Activated B cell treated with CpG ODN at 0.5 μM for 24 hours (primary cell): ENCODE measurements at regions of chr14 and their contacts with region 1.

Region 1: GRCh38 chr14:50813544-50813863 is 17.5 kb downstream of the NIN start:
- DNase-seq: no peak
- ATAC-seq: peak; percentile 76
- H3K4me3 Mint-ChIP-seq: peak overlapping the region; percentile 80
- H3K27ac Mint-ChIP-seq: peak overlapping the region; percentile 92
- H3K4me1 Mint-ChIP-seq: peaks cover 67% of the 10 kb centered on the region
- H3K27me3 Mint-ChIP-seq: no peaks in the 10 kb centered on the region
- CTCF ChIP-seq: no peak

Region 2: DNA sequence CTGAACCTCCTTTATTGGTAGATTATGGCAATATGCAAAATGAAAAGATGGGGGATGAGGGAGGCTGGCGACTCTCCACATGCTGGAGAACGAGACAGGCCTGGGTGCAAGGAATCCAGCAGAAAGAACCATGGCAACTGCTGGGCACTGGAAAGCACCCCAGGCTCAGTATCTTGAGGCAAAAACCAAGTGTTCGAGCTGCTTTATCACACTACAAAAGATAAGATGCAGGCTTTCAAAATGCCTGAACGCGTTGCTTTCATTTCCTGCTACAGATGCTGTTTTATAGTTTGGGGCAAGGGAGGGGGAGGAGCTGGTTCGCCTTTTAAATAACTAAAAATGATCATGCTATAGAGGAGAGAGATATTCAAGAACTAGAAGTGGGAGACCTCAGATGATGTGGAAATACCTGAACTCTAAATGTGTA is 21.4 kb before region 1 on chr14:
- CTCF ChIA-PET with region 1: interaction called, 3 read pairs
- POLR2A ChIA-PET with region 1: interaction called, 10 read pairs
- intact Hi-C with region 1: loop called (anchors 1 kb)
- DNase-seq: no peak
- ATAC-seq: peak; percentile 43
- H3K4me3 Mint-ChIP-seq: peak overlapping the region; percentile 66
- H3K27ac Mint-ChIP-seq: peak overlapping the region; percentile 92
- H3K4me1 Mint-ChIP-seq: peaks cover 98% of the 10 kb centered on the region
- H3K27me3 Mint-ChIP-seq: no peaks in the 10 kb centered on the region
- CTCF ChIP-seq: no peak

Region 3: DNA sequence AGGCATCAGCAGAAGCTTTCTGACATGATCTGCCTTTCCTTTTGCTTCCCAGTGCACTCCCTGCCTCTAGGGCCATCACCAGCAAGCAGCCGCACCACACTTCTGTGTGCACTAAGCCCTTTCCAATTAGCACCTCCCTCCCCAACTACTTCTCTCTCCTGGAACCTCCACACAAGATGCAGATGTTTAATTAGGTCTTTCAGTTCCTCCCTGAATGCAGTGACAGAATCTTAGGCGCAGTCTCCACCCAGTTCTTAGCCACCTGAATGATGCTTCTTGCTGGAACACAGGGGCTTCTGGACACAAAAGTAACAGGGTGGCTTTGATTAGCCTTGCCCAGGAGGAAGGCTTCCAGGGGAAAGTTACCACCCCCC is 15.5 kb before region 1 on chr14:
- CTCF ChIA-PET with region 1: no interaction called
- POLR2A ChIA-PET with region 1: interaction called, 8 read pairs
- intact Hi-C with region 1: loop called (anchors 1 kb)
- DNase-seq: no peak
- ATAC-seq: peak; percentile 86
- H3K4me3 Mint-ChIP-seq: peak overlapping the region; percentile 58
- H3K27ac Mint-ChIP-seq: peak overlapping the region; percentile 51
- H3K4me1 Mint-ChIP-seq: peaks cover 74% of the 10 kb centered on the region
- H3K27me3 Mint-ChIP-seq: no peaks in the 10 kb centered on the region
- CTCF ChIP-seq: no peak